ENCODE measurements at regions of chr7 and their contacts with region 1.

Region 1: GRCh38 chr7:139133335-139134139 is 24.0 kb upstream of the ZC3HAV1 start:
- DNase-seq: peak; percentile 52 to 66
- ATAC-seq: peak; percentile 98 to 99
- H3K4me3 ChIP-seq: peak overlapping the region; percentile 60 to 70 (median 62)
- H3K27ac ChIP-seq: peak overlapping the region; percentile 37 to 64 (median 44)
- H3K4me1 ChIP-seq: peaks cover 9 to 14% of the 10 kb centered on the region in 2 donors
- H3K27me3 ChIP-seq: no peaks in the 10 kb centered on the region
- CTCF ChIP-seq: no peak
- POLR2A ChIP-seq: no peak

Region 2: DNA sequence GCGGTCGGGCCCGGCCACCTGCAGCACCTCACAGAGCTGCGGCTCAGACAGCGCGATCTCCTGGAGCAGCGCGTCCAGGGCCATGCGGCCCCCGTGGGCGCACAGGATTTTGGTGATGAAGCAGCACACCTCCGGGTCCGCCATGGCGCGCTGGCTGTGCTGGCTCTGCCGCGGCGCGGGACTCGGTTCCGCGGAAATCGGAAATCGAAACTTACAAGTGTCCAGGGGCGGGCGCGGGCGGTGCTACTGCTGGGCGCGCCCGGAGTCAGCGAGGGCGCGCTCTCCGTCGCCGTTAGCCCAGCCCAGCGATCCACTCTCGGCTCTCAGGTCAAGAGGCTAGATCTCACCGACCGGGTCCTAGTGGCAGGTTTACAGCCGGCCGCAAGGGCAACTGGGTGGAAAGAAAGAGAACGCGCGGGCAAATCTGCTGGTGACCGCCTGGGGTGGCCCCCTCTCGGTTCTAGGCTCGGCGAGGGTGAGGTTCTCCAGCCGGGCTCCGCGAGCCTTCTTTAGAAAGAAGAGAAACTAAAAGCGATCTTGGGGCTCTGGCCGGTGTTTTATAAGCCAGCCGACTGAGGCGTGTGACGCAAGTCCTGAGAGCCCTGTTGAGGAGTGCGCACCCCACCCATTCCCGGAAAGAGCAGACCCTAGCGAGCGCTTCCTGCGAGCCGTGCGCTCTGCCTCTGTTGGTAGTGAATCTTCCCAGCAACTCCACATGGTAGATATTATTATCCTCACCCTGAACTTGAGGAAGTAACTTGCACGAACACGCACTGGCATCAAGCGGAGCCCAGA is 24.2 kb before region 1 on chr7 and contains the start of gene ZC3HAV1:
- in situ Hi-C with region 1: no loop called
- intact Hi-C with region 1: loop called (anchors 1 kb)
- DNase-seq: peak; percentile 71 to 73
- ATAC-seq: peak; percentile 77 to 85
- H3K4me3 ChIP-seq: peak within 1 kb of the TSS; percentile 77 to 97 (median 90)
- H3K27ac ChIP-seq: peak within 1 kb of the TSS; percentile 84 to 92 (median 86)
- H3K4me1 ChIP-seq: peaks cover 5 to 6% of the 10 kb centered on the region in 2 donors
- H3K27me3 ChIP-seq: no peaks in the 10 kb centered on the region
- CTCF ChIP-seq: peak in 1 of 5 experiments; percentile 23
- POLR2A ChIP-seq: peak; percentile 45 to 67
- total RNA-seq, gene ZC3HAV1: 3.5 to 10.4 (median 4.5) TPM

Region 3: DNA sequence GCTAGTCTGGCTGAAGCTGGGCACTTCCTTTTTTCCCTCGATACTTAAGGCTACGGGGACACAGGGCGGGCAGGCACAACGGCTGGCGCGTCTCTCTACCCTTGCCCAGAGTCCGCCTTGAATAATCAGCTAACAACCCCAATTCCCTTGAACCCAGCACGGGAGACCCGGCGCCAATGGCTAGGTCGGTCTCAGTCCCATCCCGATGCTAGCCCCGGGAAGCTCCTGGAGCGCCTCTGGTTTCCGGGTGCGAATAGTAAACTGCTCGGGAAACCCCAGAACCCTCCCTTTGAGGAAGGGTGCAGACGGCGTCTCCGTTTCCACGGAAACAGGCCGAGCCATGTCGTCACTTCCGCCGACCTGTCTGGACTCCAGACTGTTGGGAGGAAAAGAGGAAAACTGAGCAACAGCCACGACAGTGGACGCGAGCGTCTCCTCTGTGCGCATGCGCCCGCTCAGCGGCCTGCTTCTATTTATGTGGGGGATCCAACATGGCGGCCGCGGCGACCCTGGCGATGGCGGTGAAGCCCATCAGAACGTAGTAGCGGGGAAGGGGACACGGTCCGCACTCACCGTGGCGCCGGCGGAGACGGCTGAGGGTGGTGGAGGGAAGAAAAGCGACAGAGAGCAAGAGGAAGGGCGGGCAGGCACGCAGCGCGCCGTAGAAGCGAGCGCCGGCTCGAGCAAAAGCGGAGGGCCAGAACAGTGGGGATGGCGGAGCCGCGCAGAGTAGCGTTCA is 97.4 kb after region 1 on chr7 and contains the start of gene UBN2:
- in situ Hi-C with region 1: no loop called
- intact Hi-C with region 1: loop called (anchors 2 kb)
- DNase-seq: peak; percentile 91 to 93
- ATAC-seq: peak; percentile 98
- H3K4me3 ChIP-seq: peak within 1 kb of the TSS; percentile 83 to 99 (median 92)
- H3K27ac ChIP-seq: peak within 1 kb of the TSS; percentile 88 to 99 (median 96)
- H3K4me1 ChIP-seq: peaks cover 32 to 40% of the 10 kb centered on the region in 2 donors
- H3K27me3 ChIP-seq: no peaks in the 10 kb centered on the region
- CTCF ChIP-seq: no peak
- POLR2A ChIP-seq: peak; percentile 49 to 79
- total RNA-seq, gene UBN2: 12.0 to 24.8 (median 17.2) TPM

Region 4: DNA sequence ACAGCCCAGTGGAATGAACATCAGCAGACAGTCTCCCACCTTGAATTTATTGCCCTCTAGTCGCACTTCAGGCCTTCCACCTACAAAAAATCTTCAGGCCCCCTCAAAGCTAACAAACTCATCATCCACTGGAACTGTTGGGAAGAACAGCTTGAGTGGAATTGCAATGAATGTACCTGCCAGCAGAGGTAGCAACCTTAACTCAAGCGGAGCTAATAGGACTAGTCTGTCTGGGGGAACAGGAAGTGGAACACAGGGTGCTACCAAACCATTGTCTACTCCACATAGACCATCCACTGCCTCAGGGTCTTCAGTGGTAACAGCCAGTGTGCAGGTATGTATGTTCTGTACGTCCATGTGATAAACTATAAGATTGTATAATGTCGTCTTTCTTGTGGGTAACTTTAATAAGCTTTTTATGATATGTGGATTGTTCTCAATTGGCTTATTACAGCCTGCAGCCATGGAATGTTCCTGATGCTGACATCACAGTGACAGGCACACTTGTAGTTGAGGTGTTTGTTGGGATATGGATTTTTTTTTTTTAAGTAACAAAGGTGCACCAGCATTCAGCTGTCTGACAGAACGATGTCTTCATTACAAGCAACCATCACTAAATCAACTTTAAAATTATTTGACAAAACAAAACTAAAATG is 150.8 kb after region 1 on chr7:
- in situ Hi-C with region 1: no loop called
- intact Hi-C with region 1: no loop called
- DNase-seq: no peak
- ATAC-seq: no peak
- H3K4me3 ChIP-seq: no peak overlapping the region
- H3K27ac ChIP-seq: no peak overlapping the region
- H3K4me1 ChIP-seq: no peaks in the 10 kb centered on the region
- H3K27me3 ChIP-seq: no peaks in the 10 kb centered on the region
- CTCF ChIP-seq: no peak
- POLR2A ChIP-seq: no peak

Region 5: DNA sequence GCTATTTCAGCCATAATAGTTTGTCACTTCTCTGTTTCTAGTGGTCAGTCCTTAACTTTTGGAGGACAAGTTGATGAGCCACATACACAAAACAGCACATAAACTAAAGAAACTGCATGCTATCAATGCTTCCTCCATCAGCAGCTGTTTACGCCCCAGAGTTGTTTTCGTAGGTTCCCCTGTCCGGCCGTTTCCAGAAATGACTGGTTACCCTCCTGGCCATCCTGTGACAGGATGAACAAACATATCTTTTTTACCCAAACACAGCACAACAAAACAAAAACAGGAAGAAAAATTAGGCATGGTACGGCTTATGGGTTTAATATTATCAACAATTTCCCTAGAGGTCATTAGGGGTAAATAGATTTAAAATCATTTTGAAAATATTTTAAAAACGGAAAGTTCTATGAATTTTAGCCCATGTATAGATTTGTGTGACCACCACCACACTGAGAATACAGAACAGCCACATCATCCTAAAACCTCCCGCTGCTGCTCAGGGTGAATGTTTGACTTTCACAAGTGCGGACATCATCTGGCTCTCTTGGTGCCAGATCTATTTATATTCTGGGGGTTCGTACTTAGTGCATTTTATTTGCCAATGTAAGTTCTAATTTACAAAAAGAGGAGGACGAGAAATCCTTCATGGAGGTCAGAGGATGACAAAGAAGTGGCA is 569.4 kb after region 1 on chr7:
- in situ Hi-C with region 1: no loop called
- intact Hi-C with region 1: no loop called
- DNase-seq: no peak
- ATAC-seq: peak; percentile 80 to 82
- H3K4me3 ChIP-seq: no peak overlapping the region
- H3K27ac ChIP-seq: peak overlapping the region; percentile 70 to 77 (median 72)
- H3K4me1 ChIP-seq: peaks cover 23 to 54% of the 10 kb centered on the region in 2 donors
- H3K27me3 ChIP-seq: no peaks in the 10 kb centered on the region
- CTCF ChIP-seq: peak in 1 of 5 experiments; percentile 2
- POLR2A ChIP-seq: peak in 1 of 2 donors; percentile 5